Activated CD4-positive, alpha-beta memory T cell treated with anti-CD3 and anti-CD28 coated beads, Interleukin-2, amount 10 ng/mL, durations not matched to agents 7 days and 5 days (primary cell): ENCODE measurements at regions of chr2 and their contacts with region 1.

Region 1: DNA sequence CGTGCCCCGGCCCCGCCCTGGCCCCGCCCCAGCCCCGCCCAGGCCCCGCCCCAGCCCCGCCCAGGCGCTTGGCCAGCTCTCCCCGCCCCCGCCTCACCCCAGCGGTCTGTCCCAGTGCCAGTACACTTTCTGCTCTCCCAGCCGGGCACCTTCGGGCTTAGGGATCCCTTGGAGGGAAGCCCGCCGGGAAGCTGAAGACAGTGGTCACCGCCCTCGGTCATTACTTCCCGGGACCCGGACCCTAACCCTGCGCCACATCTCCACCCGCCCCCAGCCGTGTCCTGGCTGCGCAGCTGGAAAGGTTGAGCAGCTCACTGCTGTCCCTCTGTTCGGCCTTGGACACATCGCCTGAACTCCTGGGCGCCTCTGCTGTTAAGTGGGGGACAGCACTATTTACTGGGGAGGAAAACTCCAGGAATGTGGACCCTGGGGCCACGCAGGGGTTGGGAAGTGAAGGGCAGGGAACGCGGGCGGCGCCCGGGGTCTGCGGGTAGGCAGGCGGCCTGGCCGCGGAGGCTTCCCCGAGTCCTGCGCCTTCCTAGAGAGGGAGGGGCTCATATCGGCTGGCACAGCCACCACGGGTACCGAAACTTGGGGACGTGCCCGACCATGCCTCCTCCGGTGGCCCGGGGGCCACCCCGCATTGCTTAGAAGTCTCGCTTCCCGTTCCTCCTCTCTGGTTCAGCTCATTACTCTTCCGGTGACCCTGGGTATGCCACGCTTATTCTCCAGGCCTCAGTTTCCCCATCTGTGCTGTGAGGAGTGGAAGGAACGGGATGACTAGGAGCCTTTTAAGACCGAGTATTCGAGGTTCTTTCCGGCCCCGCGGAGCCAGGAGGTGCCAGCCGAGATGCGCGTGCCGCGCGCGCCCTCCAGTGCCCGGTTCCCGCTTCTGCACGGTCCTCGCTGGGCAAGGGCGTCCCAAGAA is 121.0 kb downstream of the GYPC start:
- DNase-seq: peak; percentile 87
- H3K4me3 Mint-ChIP-seq: peak overlapping the region; percentile 84
- H3K27ac Mint-ChIP-seq: peak overlapping the region; percentile 47
- H3K4me1 Mint-ChIP-seq: peaks cover 15% of the 10 kb centered on the region
- H3K27me3 Mint-ChIP-seq: peaks cover 26% of the 10 kb centered on the region

Region 2: DNA sequence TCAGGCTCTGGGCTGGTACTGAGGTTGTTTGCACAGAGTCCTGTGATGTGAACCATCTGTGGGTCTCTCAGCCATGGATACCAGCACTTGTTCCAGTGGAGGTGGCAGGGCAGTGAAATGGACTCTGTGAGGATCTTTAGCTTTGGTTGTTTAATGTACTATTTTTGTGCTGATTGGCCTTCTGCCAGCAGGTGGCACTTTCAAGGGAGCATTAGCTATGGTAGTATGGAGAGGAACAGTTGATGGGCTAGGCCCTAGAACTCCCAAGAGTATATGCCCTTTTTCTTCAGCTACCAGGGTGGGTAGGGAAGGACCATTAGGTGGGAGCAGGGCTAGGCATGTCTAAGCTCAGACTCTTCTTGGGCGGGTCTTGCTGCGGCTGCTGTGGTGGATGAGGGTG is 378.0 kb before region 1 on chr2:
- CTCF ChIA-PET with region 1: interaction called, 18 read pairs
- POLR2A ChIA-PET with region 1: no interaction called
- DNase-seq: peak; percentile 35
- H3K4me3 Mint-ChIP-seq: no peak overlapping the region
- H3K27ac Mint-ChIP-seq: no peak overlapping the region
- H3K4me1 Mint-ChIP-seq: no peaks in the 10 kb centered on the region
- H3K27me3 Mint-ChIP-seq: peaks cover 3% of the 10 kb centered on the region

Region 3: GRCh38 chr2:126527836-126528507 is 249.0 kb before region 1 on chr2:
- CTCF ChIA-PET with region 1: interaction called, 100 read pairs
- POLR2A ChIA-PET with region 1: interaction called, 6 read pairs
- DNase-seq: peak; percentile 71
- H3K4me3 Mint-ChIP-seq: no peak overlapping the region
- H3K27ac Mint-ChIP-seq: no peak overlapping the region
- H3K4me1 Mint-ChIP-seq: no peaks in the 10 kb centered on the region
- H3K27me3 Mint-ChIP-seq: peaks cover 1% of the 10 kb centered on the region

Region 4: DNA sequence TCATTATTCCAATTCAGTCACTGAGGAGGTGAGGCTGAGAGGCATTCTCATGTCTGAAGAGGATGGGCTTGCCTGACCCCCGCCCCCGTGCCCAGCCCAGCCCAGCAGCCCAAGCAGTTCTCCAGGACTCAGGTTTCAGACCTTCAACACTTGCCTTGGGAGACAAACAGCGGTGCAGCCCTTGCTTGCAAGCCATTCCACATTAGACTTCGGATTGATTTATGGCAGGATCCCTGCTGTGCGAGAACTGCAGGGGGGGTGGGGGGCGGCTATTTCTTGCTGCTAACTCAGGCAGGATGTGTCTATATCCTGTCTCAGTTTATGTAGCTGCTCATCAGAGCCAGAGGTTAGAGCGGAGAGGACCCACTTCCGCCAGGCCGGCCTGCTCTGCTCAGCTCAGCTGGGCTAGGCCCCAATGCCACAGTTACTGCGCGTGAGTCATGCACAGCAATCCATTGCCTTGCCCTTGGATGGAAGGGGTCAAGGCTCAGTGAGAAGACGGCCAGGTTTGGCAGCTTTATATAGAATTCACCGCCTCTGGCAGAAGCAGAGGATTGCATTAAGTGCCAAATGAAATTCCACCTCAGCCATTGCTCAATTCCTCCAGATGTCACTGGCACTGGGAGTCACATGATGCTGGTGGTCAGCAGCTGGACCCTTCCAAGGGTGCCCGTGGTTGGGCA is 119.2 kb before region 1 on chr2:
- CTCF ChIA-PET with region 1: interaction called, 17 read pairs
- POLR2A ChIA-PET with region 1: interaction called, 8 read pairs
- DNase-seq: peak; percentile 87
- H3K4me3 Mint-ChIP-seq: peak overlapping the region; percentile 85
- H3K27ac Mint-ChIP-seq: peak overlapping the region; percentile 93
- H3K4me1 Mint-ChIP-seq: peaks cover 60% of the 10 kb centered on the region
- H3K27me3 Mint-ChIP-seq: no peaks in the 10 kb centered on the region

Region 5: DNA sequence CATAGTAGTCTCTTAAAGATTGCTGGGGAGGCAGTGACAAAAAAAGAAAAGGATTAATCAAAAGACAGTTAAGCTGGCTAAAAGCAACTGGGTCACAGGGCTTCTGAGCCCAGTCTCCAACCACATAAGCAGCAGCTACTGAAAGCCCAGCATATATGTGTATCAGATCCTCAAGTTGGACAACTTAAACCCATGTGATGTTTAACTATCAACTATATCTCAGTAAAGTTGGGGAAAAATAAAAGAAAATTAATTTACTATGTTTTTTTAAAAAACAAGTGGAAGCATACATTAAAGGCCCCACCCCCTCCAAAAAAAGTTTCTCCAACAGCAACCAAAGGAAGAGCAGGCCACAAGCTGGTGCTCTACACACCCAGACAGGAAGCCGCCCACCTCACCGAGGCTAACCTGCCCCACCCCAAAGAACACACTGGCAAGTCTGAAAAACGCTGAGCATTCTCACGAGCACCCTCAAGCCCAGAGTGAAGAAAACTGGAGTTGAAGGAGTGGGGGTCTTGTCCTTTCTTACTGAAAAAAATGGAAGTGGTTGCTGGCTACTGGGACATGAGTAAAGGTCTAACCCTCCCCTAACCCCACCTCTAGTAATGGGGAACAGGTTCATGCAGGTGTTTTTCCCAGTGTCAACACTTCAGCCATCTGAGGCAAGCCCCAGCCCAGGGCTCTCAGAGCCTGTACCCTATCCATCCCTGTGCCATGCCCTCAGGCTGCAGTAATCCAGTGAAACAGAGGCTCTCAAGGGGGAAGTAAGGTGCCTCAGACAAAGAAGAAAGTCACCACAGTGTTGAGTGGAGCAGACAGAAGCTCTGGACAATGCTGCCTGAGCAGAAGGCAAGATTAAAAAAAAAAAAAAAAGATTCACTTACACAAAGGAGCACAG is 14.7 kb before region 1 on chr2:
- CTCF ChIA-PET with region 1: interaction called, 10 read pairs
- POLR2A ChIA-PET with region 1: interaction called, 3 read pairs
- DNase-seq: peak; percentile 78
- H3K4me3 Mint-ChIP-seq: peak overlapping the region; percentile 26
- H3K27ac Mint-ChIP-seq: peak overlapping the region; percentile 78
- H3K4me1 Mint-ChIP-seq: peaks cover 39% of the 10 kb centered on the region
- H3K27me3 Mint-ChIP-seq: peaks cover 19% of the 10 kb centered on the region